Activated T-helper 1 cell treated with anti-CD3 and anti-CD28 coated beads, Interleukin-12 subunit alpha, Interleukin-12 subunit beta, Interleukin-2, Interleukin-4 antibody, amounts not matched to agents 30 ng/mL and 10 ng/mL and 1 ng/mL, durations not matched to agents 14 hours and 24 hours and 36 hours (primary cell): ENCODE measurements at regions of chr11 and their contacts with region 1.

Region 1: DNA sequence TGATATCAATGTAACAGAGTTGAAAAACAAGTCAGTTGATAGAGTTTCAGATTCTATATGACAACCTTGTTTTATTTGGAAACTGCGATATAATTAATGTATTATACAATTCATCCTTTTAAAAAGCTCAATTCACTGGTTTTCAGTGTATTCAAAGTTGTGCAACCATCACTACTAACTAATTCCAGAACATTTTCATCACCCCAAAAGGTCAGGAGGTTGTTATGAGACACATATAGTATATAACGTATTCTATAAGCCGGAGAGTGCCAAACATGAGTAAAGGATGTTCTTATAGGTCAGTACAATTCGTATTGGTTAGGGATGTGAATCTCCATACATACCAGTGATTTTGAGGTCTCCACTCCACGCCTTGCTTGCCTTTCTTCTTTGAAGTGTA is 40.1 kb upstream of the UCP3 start:
- DNase-seq: no peak
- H3K4me3 Mint-ChIP-seq: no peak overlapping the region
- H3K27ac Mint-ChIP-seq: no peak overlapping the region
- H3K4me1 Mint-ChIP-seq: no peaks in the 10 kb centered on the region
- H3K27me3 Mint-ChIP-seq: no peaks in the 10 kb centered on the region

Region 2: DNA sequence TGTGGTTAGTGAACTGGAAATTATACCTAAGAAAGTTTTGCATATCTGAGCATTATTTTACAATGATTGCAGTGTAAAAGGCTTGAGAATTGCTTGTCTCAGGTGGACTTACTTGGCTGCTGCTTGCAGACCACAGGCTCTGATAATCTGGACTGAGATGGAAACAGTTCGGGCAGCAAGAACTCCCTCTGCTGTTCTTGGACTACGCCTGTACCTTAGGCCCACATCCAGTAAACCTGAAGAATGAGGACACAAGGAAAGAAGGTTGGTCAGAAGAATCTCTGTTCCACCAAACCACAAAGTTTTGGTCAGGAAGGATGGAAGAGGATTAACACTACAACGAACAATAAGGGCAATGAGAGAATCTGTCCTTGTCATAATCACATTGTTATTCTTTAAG is 41.7 kb after region 1 on chr11:
- intact Hi-C with region 1: loop called (anchors 5 kb)
- DNase-seq: no peak
- H3K4me3 Mint-ChIP-seq: no peak overlapping the region
- H3K27ac Mint-ChIP-seq: no peak overlapping the region
- H3K4me1 Mint-ChIP-seq: no peaks in the 10 kb centered on the region
- H3K27me3 Mint-ChIP-seq: no peaks in the 10 kb centered on the region